ENCODE measurements at regions of chr3 and their contacts with region 1.

Region 1: GRCh38 chr3:122392868-122393844 is 9.2 kb downstream of the FAM162A start:
- DNase-seq: peak; percentile 41
- CTCF ChIP-seq: peak; percentile 58

Region 2: DNA sequence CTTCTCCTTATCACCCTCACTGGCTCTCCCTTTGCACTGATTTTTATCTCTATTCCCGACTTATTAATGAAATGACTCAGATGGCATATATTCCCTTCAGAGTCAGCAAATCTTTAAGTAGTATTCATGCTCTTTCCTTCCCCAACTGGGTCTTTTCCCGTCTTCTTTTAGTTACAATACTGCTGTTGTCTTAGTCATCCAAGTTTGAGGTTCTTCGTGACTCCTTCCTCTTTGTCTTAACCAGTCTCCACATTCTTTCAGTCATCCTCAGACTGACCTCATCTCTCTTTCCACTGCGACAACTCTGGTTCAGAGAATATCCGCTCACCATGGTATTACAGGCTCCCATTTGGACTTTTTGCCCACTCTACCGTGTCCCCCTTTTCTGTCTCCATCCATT is 10.3 kb after region 1 on chr3:
- CTCF ChIA-PET with region 1: interaction called, 82 read pairs
- POLR2A ChIA-PET with region 1: no interaction called
- DNase-seq: no peak
- CTCF ChIP-seq: no peak

Region 3: GRCh38 chr3:122415720-122416654 is 22.8 kb after region 1 on chr3 and contains the start of gene WDR5B:
- CTCF ChIA-PET with region 1: interaction called, 82 read pairs
- POLR2A ChIA-PET with region 1: no interaction called
- DNase-seq: peak; percentile 97
- CTCF ChIP-seq: no peak

Region 4: GRCh38 chr3:122642935-122643334 is 249.8 kb after region 1 on chr3:
- CTCF ChIA-PET with region 1: no interaction called
- POLR2A ChIA-PET with region 1: no interaction called
- DNase-seq: peak; percentile 43
- CTCF ChIP-seq: no peak

Region 5: GRCh38 chr3:123535580-123535979 is 1142.4 kb after region 1 on chr3:
- CTCF ChIA-PET with region 1: no interaction called
- POLR2A ChIA-PET with region 1: no interaction called
- DNase-seq: no peak
- CTCF ChIP-seq: no peak